Common myeloid progenitor, CD34-positive (primary cell): ENCODE measurements at regions of chr16 and their contacts with region 1.

Region 1: GRCh38 chr16:30472328-30472942 is at the start of gene ITGAL:
- DNase-seq: peak; percentile 55 to 92 (median 87)
- H3K4me3 ChIP-seq: peak within 1 kb of the TSS in 6 of 7 experiments; percentile 38 to 79 (median 50)
- H3K27ac ChIP-seq: peak within 1 kb of the TSS; percentile 66 to 77
- H3K4me1 ChIP-seq: peaks cover 0 to 64% (median 31%) of the 10 kb centered on the region in 4 experiments
- H3K27me3 ChIP-seq: no peaks in the 10 kb centered on the region

Region 2: GRCh38 chr16:30458561-30459394 is 13.7 kb before region 1 on chr16:
- CTCF ChIA-PET with region 1: interaction called, 32 read pairs
- POLR2A ChIA-PET with region 1: interaction called, 8 read pairs
- DNase-seq: peak; percentile 94 to 99 (median 99)
- H3K4me3 ChIP-seq: peak overlapping the region in 2 of 7 experiments; percentile 31 to 60
- H3K27ac ChIP-seq: peak overlapping the region; percentile 88 to 91
- H3K4me1 ChIP-seq: peaks cover 13 to 67% (median 39%) of the 10 kb centered on the region in 4 experiments
- H3K27me3 ChIP-seq: no peaks in the 10 kb centered on the region

Region 3: GRCh38 chr16:30602616-30603277 is 130.3 kb after region 1 on chr16:
- CTCF ChIA-PET with region 1: no interaction called
- POLR2A ChIA-PET with region 1: no interaction called
- DNase-seq: no peak
- H3K4me3 ChIP-seq: no peak overlapping the region
- H3K27ac ChIP-seq: no peak overlapping the region
- H3K4me1 ChIP-seq: peaks cover 0 to 5% (median 3%) of the 10 kb centered on the region in 4 experiments
- H3K27me3 ChIP-seq: no peaks in the 10 kb centered on the region